ENCODE measurements at regions of chr2 and their contacts with region 1.

Region 1: GRCh38 chr2:73828818-73829570 is at the start of gene STAMBP:
- H3K4me3 ChIP-seq: peak within 1 kb of the TSS; percentile 91
- H3K27ac ChIP-seq: peak within 1 kb of the TSS; percentile 80
- H3K4me1 ChIP-seq: 0 out of 2 replicates have a peak, but pooled peaks cover 4% of the 10 kb centered on the region
- CTCF ChIP-seq: no peak

Region 2: GRCh38 chr2:73736855-73737779 is 91.9 kb before region 1 on chr2 and contains the start of gene TPRKB:
- CTCF ChIA-PET with region 1: no interaction called
- POLR2A ChIA-PET with region 1: interaction called, 11 read pairs
- H3K4me3 ChIP-seq: peak within 1 kb of the TSS; percentile 88
- H3K27ac ChIP-seq: peak within 1 kb of the TSS; percentile 44
- H3K4me1 ChIP-seq: peaks cover 4% of the 10 kb centered on the region; the same call in 1 of the 2 replicates
- CTCF ChIP-seq: no peak

Region 3: GRCh38 chr2:73812635-73813034 is 16.4 kb before region 1 on chr2:
- CTCF ChIA-PET with region 1: interaction called, 28 read pairs
- POLR2A ChIA-PET with region 1: interaction called, 3 read pairs
- H3K4me3 ChIP-seq: no peak overlapping the region
- H3K27ac ChIP-seq: no peak overlapping the region
- H3K4me1 ChIP-seq: no peaks in the 10 kb centered on the region
- CTCF ChIP-seq: no peak

Region 4: GRCh38 chr2:73839652-73840411 is 10.8 kb after region 1 on chr2:
- CTCF ChIA-PET with region 1: interaction called, 20 read pairs
- POLR2A ChIA-PET with region 1: interaction called, 8 read pairs
- H3K4me3 ChIP-seq: no peak overlapping the region
- H3K27ac ChIP-seq: no peak overlapping the region
- H3K4me1 ChIP-seq: no peaks in the 10 kb centered on the region; the same call in 1 of the 2 replicates
- CTCF ChIP-seq: no peak

Region 5: DNA sequence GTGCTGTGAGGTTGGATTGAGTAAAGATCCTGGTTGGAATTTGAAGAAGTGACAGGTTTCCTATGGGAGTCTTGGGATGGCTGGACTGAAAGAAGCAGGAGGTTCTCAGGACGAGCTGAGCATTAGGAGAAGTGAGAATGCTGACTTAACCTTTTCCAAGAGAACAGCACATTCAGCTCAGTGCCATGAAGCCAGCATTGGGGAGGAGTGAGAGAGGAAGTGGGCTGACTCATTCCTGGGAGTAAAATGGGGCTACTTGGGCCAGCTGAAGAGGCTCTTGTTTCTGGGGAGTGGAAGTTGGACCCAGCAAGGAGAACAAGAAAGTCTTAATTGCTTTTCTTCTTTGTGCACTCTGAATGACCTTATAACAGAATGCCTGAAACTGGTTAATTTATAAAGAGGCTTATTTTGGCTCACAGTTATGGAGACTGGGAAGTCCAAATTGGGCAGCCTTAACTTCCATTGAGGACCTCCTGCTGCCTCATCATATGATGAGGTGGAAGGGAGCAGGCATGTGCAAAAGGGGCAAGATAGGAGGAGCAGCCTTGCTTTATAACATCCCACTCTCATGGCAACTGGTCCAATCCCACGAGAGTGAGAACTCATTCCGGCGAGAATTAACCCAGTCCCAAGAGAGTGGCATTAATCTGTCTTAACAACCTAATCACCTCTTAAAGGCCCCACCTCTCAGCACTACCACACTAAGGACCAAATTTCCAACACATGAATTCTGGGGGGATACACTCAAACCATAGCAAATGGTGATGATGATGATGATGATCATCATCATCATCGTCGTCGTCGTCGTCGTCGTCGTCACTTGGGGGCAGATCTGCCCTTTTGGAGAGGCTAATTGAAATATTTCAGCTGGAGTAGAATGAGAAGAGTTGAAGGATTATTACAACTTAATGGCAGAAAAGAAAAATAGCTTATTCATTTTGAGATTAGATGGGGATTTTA is 123.8 kb after region 1 on chr2:
- CTCF ChIA-PET with region 1: no interaction called
- POLR2A ChIA-PET with region 1: no interaction called
- H3K4me3 ChIP-seq: no peak overlapping the region
- H3K27ac ChIP-seq: no peak overlapping the region
- H3K4me1 ChIP-seq: no peaks in the 10 kb centered on the region
- CTCF ChIP-seq: no peak

Region 6: DNA sequence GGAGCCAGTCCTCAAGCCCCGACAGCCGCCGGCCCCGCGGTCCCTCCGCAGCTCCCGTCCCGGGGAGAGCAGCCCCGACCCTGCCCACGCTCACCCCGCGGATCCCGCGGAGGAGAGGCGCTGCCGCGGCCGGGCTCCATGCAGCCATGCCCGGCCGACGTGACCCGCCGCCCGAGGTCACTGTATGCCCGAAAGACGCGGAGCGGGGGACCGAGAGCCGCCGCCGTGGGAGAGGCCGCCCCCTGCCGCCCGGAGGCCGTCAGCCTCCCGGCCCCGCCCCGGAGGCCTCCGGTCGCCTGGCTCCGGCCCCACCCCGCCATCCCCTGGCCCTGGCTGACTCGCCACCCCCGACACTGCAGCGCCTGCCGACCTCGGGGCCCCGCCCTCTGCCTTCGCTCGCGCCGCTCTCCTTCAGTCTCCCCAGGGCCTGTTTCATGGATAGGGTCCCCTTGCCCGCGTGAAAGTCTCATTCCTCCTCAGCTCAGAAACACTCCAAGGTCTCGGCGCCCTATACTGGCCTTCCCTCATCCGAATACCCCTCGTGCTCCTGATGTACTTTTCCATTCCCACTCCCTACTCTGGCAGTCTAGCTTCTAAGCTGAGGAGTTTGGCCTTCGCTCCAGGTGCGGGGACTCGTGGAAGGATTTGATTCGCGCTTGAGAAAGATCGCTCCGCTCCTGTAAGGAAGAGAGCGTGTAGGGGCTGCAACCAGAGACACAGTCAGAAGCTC is 318.9 kb after region 1 on chr2 and contains the start of gene BOLA3:
- CTCF ChIA-PET with region 1: interaction called, 155 read pairs
- POLR2A ChIA-PET with region 1: interaction called, 8 read pairs
- H3K4me3 ChIP-seq: peak within 1 kb of the TSS; percentile 63
- H3K27ac ChIP-seq: peak within 1 kb of the TSS; percentile 67
- H3K4me1 ChIP-seq: no peaks in the 10 kb centered on the region
- CTCF ChIP-seq: peak; percentile 59

Measured in HEK293 (cell line).